Caco-2 (cell line): ENCODE measurements at regions of chr19 and their contacts with region 1.

Region 1: DNA sequence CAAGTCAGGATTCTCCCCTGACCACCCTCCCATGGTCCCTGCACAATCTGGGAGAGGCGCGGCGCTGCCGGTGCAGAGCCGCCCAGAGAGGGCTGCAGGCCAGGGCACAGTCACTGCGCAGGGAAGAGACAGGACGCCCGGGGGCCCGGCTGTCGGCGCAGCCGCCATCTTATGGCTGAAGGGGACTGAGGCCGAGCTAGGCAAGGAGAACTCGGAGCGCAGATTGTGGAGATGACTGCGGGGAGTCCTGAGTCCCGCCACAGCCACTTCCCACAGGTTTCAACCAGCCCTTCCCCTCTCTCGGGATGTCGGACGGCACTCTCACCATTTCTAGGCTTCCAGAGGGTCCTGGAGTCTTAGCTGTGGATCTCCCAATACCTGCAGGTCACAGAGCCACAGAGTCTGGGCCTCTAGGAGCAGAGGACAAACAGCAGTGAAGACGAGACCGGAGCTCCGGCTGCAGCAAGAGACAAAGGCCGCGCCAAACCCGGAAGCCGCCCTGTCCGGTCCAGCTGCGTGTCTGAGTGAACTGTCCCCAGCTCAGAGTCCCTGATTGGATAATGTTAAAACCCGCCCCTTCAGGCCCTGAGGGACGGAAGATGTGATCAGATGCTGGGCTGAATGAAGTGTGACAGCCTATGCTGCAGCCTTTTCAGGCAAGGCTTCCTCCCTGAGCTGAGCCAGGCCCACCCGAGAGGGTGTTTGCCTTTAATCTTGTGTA is at the start of gene ZNF708:
- DNase-seq: peak; percentile 89 to 93
- H3K4me3 ChIP-seq: peak within 1 kb of the TSS; percentile 72
- H3K4me3 Mint-ChIP-seq: peak within 1 kb of the TSS; percentile 85
- H3K27ac Mint-ChIP-seq: peak within 1 kb of the TSS; percentile 95
- H3K4me1 ChIP-seq: no peaks in the 10 kb centered on the region
- H3K4me1 Mint-ChIP-seq: no peaks in the 10 kb centered on the region
- H3K27me3 ChIP-seq: no peaks in the 10 kb centered on the region
- H3K27me3 Mint-ChIP-seq: no peaks in the 10 kb centered on the region
- CTCF ChIP-seq: no peak
- total RNA-seq, gene ZNF708: 8.8 and 10.0 TPM in 2 replicates

Region 2: DNA sequence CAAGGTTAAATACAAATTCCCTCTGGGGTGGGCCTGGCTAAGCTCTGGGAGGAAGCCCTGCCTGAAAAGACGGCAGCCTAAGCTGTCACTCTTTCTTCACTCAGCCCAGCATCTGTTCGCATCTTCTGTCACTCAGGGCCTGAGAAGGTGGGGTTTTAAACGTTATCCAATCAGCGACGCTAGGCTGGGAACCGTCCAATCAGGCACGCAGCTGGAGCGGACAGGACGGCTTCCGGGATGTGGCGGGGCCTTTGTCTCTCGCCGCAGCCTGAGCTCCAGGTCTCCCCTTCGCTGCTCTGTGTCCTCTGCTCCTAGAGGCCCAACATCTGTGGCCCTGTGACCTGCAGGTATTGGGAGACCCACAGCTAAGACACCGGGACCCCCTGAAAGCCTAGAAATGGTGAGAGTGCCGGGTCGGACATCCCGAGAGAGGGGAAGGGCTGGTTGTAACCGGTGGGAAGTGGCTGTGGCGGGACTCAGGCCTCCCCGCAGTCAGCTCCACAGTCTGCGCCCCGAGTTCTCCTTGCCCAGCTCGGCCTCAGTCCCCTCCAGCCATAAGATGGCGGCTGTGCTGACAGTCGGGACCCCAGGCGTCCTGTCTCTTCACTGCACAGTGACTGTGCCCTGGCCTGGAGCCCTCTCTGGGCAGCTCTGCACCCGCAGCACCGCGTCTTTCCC is 187.1 kb before region 1 on chr19 and contains the start of gene ZNF431:
- CTCF ChIA-PET with region 1: no interaction called
- POLR2A ChIA-PET with region 1: interaction called, 13 read pairs
- intact Hi-C with region 1: no loop called
- DNase-seq: peak; percentile 90 to 94
- H3K4me3 ChIP-seq: peak within 1 kb of the TSS; percentile 75
- H3K4me3 Mint-ChIP-seq: peak within 1 kb of the TSS; percentile 95
- H3K27ac Mint-ChIP-seq: peak within 1 kb of the TSS; percentile 98
- H3K4me1 ChIP-seq: no peaks in the 10 kb centered on the region
- H3K4me1 Mint-ChIP-seq: peaks cover 9% of the 10 kb centered on the region
- H3K27me3 ChIP-seq: no peaks in the 10 kb centered on the region
- H3K27me3 Mint-ChIP-seq: no peaks in the 10 kb centered on the region
- CTCF ChIP-seq: no peak
- total RNA-seq, gene ZNF431: 17.9 TPM in 2 replicates

Region 3: DNA sequence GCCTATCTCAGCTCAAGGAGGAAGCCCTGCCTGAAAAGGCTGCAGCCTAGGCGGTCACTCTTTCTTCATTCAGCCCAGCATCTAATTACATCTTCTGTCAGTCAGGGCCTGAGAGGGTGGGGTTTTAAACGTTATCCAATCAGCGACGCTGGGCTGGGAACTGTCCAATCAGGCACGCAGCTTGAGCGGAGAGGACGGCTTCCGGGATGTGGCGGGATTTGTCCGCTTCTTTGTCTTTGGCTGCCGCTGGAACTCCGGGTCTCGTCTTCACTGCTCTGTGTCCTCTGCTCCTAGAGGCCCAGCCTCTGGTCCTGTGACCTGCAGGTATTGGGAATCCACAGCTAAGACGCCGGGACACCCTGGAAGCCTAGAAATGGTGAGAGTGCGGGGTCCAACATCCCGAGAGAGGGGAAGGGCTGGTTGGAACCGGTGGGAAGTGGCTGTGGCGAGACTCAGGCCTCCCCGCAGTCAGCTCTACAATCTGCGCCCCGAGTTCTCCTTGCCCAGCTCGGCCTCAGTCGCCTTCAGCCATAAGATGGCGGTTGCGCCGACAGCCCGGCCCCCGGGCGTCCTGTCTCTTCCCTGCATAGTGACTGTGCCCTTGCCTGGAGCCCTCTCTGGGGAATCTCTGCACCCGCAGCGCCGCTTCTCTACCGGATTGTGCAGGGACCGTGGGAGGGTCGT is 29.9 kb after region 1 on chr19 and contains the start of gene ZNF738:
- CTCF ChIA-PET with region 1: no interaction called
- POLR2A ChIA-PET with region 1: interaction called, 7 read pairs
- intact Hi-C with region 1: loop called (anchors 1 kb)
- DNase-seq: peak; percentile 89 to 95
- H3K4me3 ChIP-seq: peak within 1 kb of the TSS; percentile 58
- H3K4me3 Mint-ChIP-seq: peak within 1 kb of the TSS; percentile 99
- H3K27ac Mint-ChIP-seq: peak within 1 kb of the TSS; percentile 100
- H3K4me1 ChIP-seq: no peaks in the 10 kb centered on the region
- H3K4me1 Mint-ChIP-seq: no peaks in the 10 kb centered on the region
- H3K27me3 ChIP-seq: no peaks in the 10 kb centered on the region
- H3K27me3 Mint-ChIP-seq: no peaks in the 10 kb centered on the region
- CTCF ChIP-seq: no peak
- total RNA-seq, gene ZNF738: 9.5 and 10.4 TPM in 2 replicates

Region 4: DNA sequence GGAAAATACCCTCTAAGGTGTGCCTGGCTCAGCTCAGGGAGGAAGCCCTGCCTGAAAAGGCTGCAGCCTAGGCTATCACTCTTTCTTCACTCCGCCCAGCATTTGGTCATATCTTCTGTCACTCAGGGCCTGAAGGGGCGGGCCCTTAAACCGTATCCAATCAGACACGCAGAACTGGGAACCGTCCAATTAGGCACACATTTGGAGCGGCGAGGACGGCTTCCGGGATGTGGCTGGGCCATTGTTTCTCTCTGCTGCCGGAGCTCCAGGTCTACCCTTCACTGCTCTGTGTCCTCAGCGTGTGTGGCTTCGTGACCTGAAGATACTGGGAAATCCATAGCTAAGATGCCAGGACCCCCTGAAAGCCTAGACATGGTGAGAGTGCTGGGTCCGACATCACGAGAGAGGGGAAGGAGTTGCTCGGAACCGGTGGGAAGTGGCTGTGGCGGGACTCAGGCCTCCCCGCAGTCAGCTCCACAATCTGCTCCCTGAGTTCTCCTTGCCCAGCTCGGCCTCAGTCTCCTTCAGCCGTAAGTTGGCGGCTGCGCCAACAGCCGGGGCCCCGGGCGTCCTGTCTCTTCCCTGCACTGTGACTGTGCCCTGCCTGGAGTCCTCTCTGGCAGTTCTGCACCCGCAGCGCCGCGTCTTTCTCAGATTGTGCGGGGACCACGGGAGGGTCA is 68.0 kb after region 1 on chr19 and contains the start of gene ZNF493:
- CTCF ChIA-PET with region 1: no interaction called
- POLR2A ChIA-PET with region 1: interaction called, 7 read pairs
- intact Hi-C with region 1: loop called (anchors 1 kb)
- DNase-seq: peak; percentile 91 to 92
- H3K4me3 ChIP-seq: peak within 1 kb of the TSS; percentile 71
- H3K4me3 Mint-ChIP-seq: peak within 1 kb of the TSS; percentile 87
- H3K27ac Mint-ChIP-seq: peak within 1 kb of the TSS; percentile 75
- H3K4me1 ChIP-seq: no peaks in the 10 kb centered on the region
- H3K4me1 Mint-ChIP-seq: no peaks in the 10 kb centered on the region
- H3K27me3 ChIP-seq: no peaks in the 10 kb centered on the region
- H3K27me3 Mint-ChIP-seq: no peaks in the 10 kb centered on the region
- CTCF ChIP-seq: no peak
- total RNA-seq, gene ZNF493: 8.4 and 9.3 TPM in 2 replicates

Region 5: DNA sequence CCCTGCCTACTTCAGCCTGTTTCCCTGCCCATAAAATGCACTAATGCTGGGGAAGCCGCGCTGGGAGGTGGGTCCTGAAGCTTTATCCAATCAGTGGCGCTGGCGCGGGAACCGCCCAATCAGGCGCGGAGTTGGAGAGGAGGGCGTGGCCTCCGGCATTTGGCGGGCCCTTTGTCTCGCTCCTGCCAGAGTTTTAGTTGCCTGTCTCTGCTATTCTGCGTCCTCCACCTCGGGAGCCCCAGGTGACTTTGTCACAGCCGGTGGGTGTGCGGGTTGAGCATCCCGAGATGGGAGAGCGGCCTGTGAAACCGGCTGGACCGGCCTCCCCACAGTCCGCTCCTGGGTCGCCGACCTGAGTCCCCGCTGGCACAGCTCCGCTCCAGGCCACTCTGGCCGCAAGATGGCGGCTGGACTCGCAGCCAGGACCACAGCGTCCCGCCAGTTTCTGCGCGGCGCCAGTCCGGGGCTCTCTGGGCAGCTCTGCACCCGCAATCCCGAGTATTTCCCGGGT is 145.7 kb after region 1 on chr19:
- CTCF ChIA-PET with region 1: no interaction called
- POLR2A ChIA-PET with region 1: no interaction called
- intact Hi-C with region 1: no loop called
- DNase-seq: no peak
- H3K4me3 ChIP-seq: no peak overlapping the region
- H3K4me3 Mint-ChIP-seq: no peak overlapping the region
- H3K27ac Mint-ChIP-seq: no peak overlapping the region
- H3K4me1 ChIP-seq: no peaks in the 10 kb centered on the region
- H3K4me1 Mint-ChIP-seq: no peaks in the 10 kb centered on the region
- H3K27me3 ChIP-seq: no peaks in the 10 kb centered on the region
- H3K27me3 Mint-ChIP-seq: no peaks in the 10 kb centered on the region
- CTCF ChIP-seq: no peak